ENCODE measurements at regions of chr1 and their contacts with region 1.

Region 1: GRCh38 chr1:44237721-44238457 is 24.6 kb downstream of the DMAP1 start:
- DNase-seq: peak; percentile 65
- ATAC-seq: peak; percentile 89
- H3K4me3 Mint-ChIP-seq: no peak overlapping the region
- H3K27ac Mint-ChIP-seq: no peak overlapping the region
- H3K4me1 Mint-ChIP-seq: peaks cover 5% of the 10 kb centered on the region
- H3K27me3 Mint-ChIP-seq: no peaks in the 10 kb centered on the region

Region 2: GRCh38 chr1:44036409-44037139 is 201.3 kb before region 1 on chr1:
- CTCF ChIA-PET with region 1: no interaction called
- POLR2A ChIA-PET with region 1: no interaction called
- DNase-seq: peak; percentile 77
- ATAC-seq: peak; percentile 70
- H3K4me3 Mint-ChIP-seq: no peak overlapping the region
- H3K27ac Mint-ChIP-seq: no peak overlapping the region
- H3K4me1 Mint-ChIP-seq: peaks cover 10% of the 10 kb centered on the region
- H3K27me3 Mint-ChIP-seq: peaks cover 11% of the 10 kb centered on the region

Region 3: DNA sequence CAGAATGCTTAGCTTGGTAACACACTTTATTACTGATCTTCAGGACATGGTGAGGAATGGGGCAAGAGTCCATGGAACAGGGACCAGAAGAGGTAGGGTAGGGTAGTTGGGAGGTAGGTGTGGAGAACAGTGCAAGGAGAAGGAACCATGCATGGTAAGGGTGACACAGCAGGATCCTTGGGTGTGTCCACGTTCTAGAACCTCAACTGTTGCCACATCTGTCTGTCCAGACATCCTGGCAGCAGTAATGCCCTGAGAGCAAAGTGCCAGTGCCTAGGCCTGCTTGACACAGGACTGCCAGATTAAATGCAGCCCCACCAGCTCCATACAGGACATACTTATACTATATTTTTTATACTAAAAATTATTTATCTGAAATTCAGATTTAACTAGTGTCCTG is 10.7 kb before region 1 on chr1:
- CTCF ChIA-PET with region 1: interaction called, 17 read pairs
- POLR2A ChIA-PET with region 1: interaction called, 4 read pairs
- DNase-seq: no peak
- ATAC-seq: no peak
- H3K4me3 Mint-ChIP-seq: no peak overlapping the region
- H3K27ac Mint-ChIP-seq: no peak overlapping the region
- H3K4me1 Mint-ChIP-seq: peaks cover 7% of the 10 kb centered on the region
- H3K27me3 Mint-ChIP-seq: no peaks in the 10 kb centered on the region

Region 4: GRCh38 chr1:44283524-44284173 is 45.8 kb after region 1 on chr1:
- CTCF ChIA-PET with region 1: no interaction called
- POLR2A ChIA-PET with region 1: no interaction called
- DNase-seq: no peak
- ATAC-seq: no peak
- H3K4me3 Mint-ChIP-seq: no peak overlapping the region
- H3K27ac Mint-ChIP-seq: no peak overlapping the region
- H3K4me1 Mint-ChIP-seq: no peaks in the 10 kb centered on the region
- H3K27me3 Mint-ChIP-seq: no peaks in the 10 kb centered on the region

Measured in activated CD8-positive, alpha-beta T cell treated with anti-CD3 and anti-CD28 coated beads, Interleukin-2, amount 10 ng/mL, durations not matched to agents 7 days and 5 days (primary cell).